Head of caudate nucleus (tissue), 42 donors: ENCODE measurements at regions of chr5 and their contacts with region 1.

Region 1: GRCh38 chr5:116566251-116566650 is 8.4 kb downstream of the SEMA6A start:
- DNase-seq: no peak

Region 2: DNA sequence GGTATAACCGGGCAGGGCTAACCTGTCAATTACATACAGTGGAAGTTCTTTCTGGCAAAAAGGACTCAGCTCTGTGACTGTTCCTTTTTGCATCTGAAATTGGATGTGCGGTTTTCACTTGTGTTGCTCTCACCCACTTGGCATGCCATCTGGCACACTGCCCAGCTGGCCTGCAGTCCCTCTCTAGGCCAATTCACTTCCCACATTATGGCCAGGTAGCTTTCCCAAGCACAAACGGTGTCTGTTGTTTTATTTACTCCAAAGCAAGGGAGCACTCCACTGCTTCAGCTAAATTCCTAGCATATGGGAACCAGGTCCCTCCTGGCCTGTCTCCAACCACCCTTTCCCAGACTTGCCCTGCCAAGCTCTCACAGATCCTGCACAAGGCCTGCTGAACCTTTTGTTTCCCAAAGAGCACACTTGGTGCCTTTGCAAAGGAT is 124.1 kb before region 1 on chr5:
- intact Hi-C with region 1: loop called (anchors 10 kb)
- DNase-seq: peak in 20 of 42 donors; percentile 11 to 68 (median 37)

Region 3: GRCh38 chr5:116528519-116529234 is 37.6 kb before region 1 on chr5:
- intact Hi-C with region 1: no loop called
- DNase-seq: no peak